A673 (cell line): ENCODE measurements at regions of chr11 and their contacts with region 1.

Region 1: GRCh38 chr11:120043328-120043945 is 94.5 kb downstream of the TRIM29 start:
- DNase-seq: no peak
- H3K4me3 ChIP-seq: no peak overlapping the region
- H3K27ac ChIP-seq: no peak overlapping the region
- H3K4me1 ChIP-seq: no peaks in the 10 kb centered on the region
- H3K27me3 ChIP-seq: peaks cover 13% of the 10 kb centered on the region
- CTCF ChIP-seq: no peak

Region 2: DNA sequence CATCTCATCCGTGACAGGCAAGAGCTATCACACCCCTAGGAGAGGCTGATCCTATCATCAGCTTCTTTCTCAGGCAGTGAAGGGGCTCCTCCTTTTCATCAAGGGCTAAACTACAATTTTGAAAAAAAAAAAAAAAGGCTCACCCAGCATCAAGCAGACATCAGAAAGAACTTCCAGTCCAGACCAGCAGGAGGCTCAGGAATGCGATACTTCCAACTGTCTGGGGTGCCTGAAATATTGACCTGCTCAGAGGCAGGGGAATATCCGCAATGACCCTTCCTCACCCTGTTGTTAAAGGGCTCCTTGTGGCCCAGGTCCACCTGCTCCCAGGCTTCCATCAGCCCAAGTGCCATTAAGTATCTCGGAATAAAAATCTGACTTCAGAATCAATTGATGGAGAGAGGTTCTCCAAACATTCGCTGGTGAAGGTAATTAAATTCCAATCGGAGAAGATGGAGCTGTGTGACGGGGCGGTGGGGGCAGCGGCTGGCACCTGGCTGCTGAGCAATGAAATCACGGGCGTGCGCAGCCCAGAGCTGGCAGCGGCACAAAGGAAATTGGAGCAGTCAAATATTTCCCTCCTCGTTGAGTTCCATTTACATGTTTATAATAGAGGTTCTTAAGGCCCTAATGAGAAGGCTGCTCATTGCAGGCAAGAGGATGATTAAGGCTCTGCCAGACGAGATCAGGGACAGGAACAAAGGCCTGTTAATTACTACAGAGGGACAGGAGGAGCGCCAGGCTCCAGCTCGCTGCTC is 551.5 kb before region 1 on chr11:
- CTCF ChIA-PET with region 1: no interaction called
- POLR2A ChIA-PET with region 1: no interaction called
- intact Hi-C with region 1: no loop called
- DNase-seq: peak; percentile 38
- H3K4me3 ChIP-seq: no peak overlapping the region
- H3K27ac ChIP-seq: no peak overlapping the region
- H3K4me1 ChIP-seq: no peaks in the 10 kb centered on the region
- H3K27me3 ChIP-seq: no peaks in the 10 kb centered on the region
- CTCF ChIP-seq: peak; percentile 48; the same call in 1 of the 2 replicates

Region 3: GRCh38 chr11:120181376-120181975 is 138.0 kb after region 1 on chr11:
- CTCF ChIA-PET with region 1: no interaction called
- POLR2A ChIA-PET with region 1: interaction called, 23 read pairs
- intact Hi-C with region 1: no loop called
- DNase-seq: no peak
- H3K4me3 ChIP-seq: no peak overlapping the region
- H3K27ac ChIP-seq: no peak overlapping the region
- H3K4me1 ChIP-seq: peaks cover 10% of the 10 kb centered on the region
- H3K27me3 ChIP-seq: no peaks in the 10 kb centered on the region
- CTCF ChIP-seq: no peak

Region 4: DNA sequence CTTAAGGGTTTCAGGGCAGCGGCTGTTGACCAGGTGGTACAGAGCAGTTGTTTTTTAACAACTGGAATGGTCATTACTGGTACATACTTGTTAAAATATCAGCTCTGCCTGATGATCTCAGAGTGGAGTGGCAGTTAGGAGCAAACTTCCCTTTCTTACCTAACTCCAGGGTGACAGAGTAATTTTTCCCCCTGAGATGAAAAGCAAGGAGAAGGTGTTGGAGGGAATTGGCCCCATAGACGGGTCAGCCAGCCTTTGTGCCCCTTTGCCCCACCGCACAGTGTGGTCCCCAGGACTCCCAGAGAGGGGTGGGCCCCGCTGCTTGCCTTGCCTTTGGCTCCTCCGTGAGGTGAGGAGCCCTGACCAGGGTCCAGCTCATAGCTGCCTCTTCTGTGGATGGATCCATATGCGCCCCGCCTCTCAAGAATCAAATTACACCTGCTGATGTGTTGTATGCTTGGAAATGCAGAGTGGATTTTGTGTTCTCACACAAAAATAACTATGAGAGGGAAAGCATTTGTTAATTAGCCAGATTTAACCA is 1436.3 kb after region 1 on chr11:
- CTCF ChIA-PET with region 1: no interaction called
- POLR2A ChIA-PET with region 1: interaction called, 12 read pairs
- intact Hi-C with region 1: no loop called
- DNase-seq: no peak
- H3K4me3 ChIP-seq: no peak overlapping the region
- H3K27ac ChIP-seq: no peak overlapping the region
- H3K4me1 ChIP-seq: peaks cover 18% of the 10 kb centered on the region
- H3K27me3 ChIP-seq: no peaks in the 10 kb centered on the region
- CTCF ChIP-seq: no peak

Region 5: GRCh38 chr11:121870206-121871045 is 1827.0 kb after region 1 on chr11:
- CTCF ChIA-PET with region 1: no interaction called
- POLR2A ChIA-PET with region 1: no interaction called
- intact Hi-C with region 1: no loop called
- DNase-seq: peak; percentile 42
- H3K4me3 ChIP-seq: no peak overlapping the region
- H3K27ac ChIP-seq: no peak overlapping the region
- H3K4me1 ChIP-seq: no peaks in the 10 kb centered on the region
- H3K27me3 ChIP-seq: no peaks in the 10 kb centered on the region
- CTCF ChIP-seq: peak; percentile 54